Astrocyte of the cerebellum (primary cell): ENCODE measurements at regions of chr17 and their contacts with region 1.

Region 1: GRCh38 chr17:21275579-21276263 is 8.8 kb upstream of the MAP2K3 start:
- DNase-seq: no peak
- H3K4me3 ChIP-seq: peak overlapping the region; percentile 50
- CTCF ChIP-seq: no peak

Region 2: DNA sequence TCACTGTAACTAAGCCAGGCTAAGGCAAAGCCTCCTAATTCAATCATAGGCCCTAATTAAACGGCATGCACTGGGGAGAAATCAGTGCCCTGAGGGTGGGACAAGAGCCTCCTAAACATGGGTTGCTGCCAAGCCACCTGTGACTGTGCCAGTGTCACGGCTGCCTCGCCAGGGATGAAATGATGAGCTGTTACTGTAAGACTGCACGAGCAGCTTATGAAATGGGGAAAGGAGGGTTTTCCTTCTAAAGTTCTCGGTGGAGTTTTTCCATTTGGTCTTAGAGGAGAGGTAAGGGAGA is 74.5 kb before region 1 on chr17:
- in situ Hi-C with region 1: loop called (anchors 5 kb)
- DNase-seq: no peak
- H3K4me3 ChIP-seq: no peak overlapping the region
- CTCF ChIP-seq: no peak